ENCODE measurements at regions of chr17 and their contacts with region 1.

Region 1: GRCh38 chr17:42358434-42358833 is 29.8 kb downstream of the STAT3 start:
- DNase-seq: no peak
- H3K4me3 Mint-ChIP-seq: no peak overlapping the region
- H3K27ac Mint-ChIP-seq: peak overlapping the region; percentile 55
- H3K4me1 Mint-ChIP-seq: peaks cover 59% of the 10 kb centered on the region
- H3K27me3 Mint-ChIP-seq: no peaks in the 10 kb centered on the region

Region 2: GRCh38 chr17:42347198-42347597 is 11.2 kb before region 1 on chr17:
- intact Hi-C with region 1: loop called (anchors 1 kb)
- DNase-seq: no peak
- H3K4me3 Mint-ChIP-seq: no peak overlapping the region
- H3K27ac Mint-ChIP-seq: peak overlapping the region; percentile 70
- H3K4me1 Mint-ChIP-seq: peaks cover 57% of the 10 kb centered on the region
- H3K27me3 Mint-ChIP-seq: no peaks in the 10 kb centered on the region

Measured in activated T-helper 1 cell treated with anti-CD3 and anti-CD28 coated beads, Interleukin-12 subunit alpha, Interleukin-12 subunit beta, Interleukin-2, Interleukin-4 antibody, amounts not matched to agents 30 ng/mL and 10 ng/mL and 1 ng/mL, durations not matched to agents 14 hours and 24 hours and 36 hours (primary cell).